Heart right ventricle (tissue), 16 donors: ENCODE measurements at regions of chr20 and their contacts with region 1.

Region 1: GRCh38 chr20:25632940-25633790 is 9.4 kb upstream of the NANP start:
- DNase-seq: no peak
- ATAC-seq: no peak
- H3K4me3 ChIP-seq: no peak overlapping the region
- H3K27ac ChIP-seq: no peak overlapping the region
- H3K4me1 ChIP-seq: no peaks in the 10 kb centered on the region
- H3K27me3 ChIP-seq: no peaks in the 10 kb centered on the region
- CTCF ChIP-seq: no peak

Region 2: DNA sequence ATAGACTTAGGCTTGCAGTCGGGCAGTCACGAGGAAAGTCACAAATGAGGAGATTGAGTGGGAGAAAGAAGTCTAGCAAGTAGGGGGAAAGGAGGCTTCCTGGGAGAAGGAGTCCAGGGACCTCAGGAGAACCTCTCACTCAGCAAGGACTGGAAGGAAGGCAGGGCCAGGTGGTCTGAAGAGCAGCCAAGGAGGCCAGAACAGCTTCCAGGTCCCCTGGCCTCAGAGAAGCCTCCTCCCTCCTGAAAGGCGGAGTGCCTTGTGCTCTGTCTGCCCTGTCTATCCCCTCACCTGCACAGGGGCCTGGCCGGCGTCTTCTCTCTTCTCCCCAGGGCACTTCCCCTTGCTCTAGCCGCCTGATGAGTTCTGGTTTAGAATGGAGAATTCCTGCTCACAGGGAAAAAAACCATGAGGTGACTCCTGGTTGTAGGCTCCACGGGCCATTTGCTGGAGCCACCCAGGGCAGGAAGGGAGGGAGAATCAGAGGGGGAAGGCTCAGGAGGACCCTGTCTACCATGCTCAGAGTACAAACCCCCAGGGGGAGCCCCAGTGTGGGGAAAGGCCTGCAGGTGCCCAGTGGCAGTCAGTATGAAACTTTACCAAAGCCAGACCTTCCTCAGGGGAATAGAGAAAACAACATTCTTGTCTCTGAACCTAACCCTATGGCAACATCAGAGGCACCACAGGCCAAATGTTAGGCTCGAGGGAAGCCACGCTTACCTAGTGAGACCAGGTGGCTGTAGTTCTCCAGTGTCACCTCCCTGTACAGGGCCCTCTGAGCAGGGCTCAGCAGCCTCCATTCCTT is 52.3 kb after region 1 on chr20:
- intact Hi-C with region 1: loop called in 2 of 10 experiments (anchors 5 to 10 kb)
- DNase-seq: no peak
- ATAC-seq: peak in 2 of 8 donors; percentile 20 to 22
- H3K4me3 ChIP-seq: no peak overlapping the region
- H3K27ac ChIP-seq: no peak overlapping the region
- H3K4me1 ChIP-seq: no peaks in the 10 kb centered on the region
- H3K27me3 ChIP-seq: no peaks in the 10 kb centered on the region
- CTCF ChIP-seq: no peak